Panc1 (cell line): ENCODE measurements at regions of chr20 and their contacts with region 1.

Region 1: DNA sequence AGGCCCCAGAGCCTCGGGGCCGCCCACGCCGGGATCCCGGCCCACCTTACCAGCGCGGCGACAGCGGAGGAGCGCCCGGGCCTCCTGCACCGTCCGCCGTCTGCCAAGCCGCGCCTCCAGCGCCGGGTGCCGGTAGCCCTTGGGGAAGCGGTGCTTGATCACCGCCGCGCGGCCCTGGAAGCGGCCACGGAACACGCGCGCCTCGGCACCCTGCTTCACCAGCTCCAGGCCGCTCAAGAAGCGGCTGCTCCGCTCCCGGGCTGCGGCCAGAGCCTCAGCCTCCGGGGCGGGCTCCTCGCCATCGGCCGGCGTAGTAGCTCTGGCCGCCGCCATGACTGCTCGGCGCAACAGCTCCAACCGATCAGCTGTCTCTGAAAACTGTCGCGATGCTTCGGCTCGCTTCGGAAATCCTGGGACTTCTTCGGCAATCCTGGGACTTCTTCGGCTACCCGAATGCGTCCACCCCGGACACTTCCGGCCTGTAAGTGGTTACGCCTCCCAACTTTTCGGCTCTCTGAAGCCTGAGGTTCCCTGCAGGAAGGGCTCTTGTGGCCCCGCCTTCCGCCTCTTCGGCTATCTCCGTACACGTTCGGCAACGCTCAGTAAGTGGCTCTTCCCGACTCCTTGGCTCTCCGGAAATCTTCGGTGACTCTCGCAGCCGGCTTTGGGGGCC is at the start of gene TP53RK:
- DNase-seq: peak; percentile 100
- ATAC-seq: peak; percentile 99
- H3K4me3 ChIP-seq: peak within 1 kb of the TSS; percentile 92 to 97
- H3K27ac ChIP-seq: peak within 1 kb of the TSS; percentile 94
- H3K4me1 ChIP-seq: peaks cover 10% of the 10 kb centered on the region
- H3K27me3 ChIP-seq: no peaks in the 10 kb centered on the region
- CTCF ChIP-seq: no peak
- total RNA-seq, gene TP53RK: 13.7 TPM

Region 2: DNA sequence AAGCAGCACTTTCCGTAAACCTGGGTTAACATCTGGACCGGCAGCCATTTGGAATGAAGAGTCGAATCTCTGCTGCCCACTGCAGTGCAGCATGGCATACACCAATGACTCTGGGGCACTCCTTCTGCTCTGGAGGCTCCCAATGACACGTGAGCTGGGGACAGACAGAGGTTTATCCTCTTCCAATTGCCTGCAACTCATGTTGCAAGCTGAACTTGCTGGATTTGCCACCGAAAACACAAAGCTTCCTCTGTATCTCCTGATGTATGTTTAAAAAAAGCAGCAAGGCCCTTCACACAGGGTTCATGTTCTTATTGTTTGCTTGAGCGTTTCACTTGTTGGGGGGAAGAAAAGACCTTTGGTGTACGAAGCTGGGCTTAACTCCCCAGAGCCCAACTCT is 610.3 kb before region 1 on chr20:
- CTCF ChIA-PET with region 1: no interaction called
- POLR2A ChIA-PET with region 1: no interaction called
- in situ Hi-C with region 1: no loop called
- intact Hi-C with region 1: no loop called
- DNase-seq: no peak
- ATAC-seq: no peak
- H3K4me3 ChIP-seq: no peak overlapping the region
- H3K27ac ChIP-seq: no peak overlapping the region
- H3K4me1 ChIP-seq: no peaks in the 10 kb centered on the region; the same call in none of the 2 replicates
- H3K27me3 ChIP-seq: no peaks in the 10 kb centered on the region
- CTCF ChIP-seq: no peak

Region 3: DNA sequence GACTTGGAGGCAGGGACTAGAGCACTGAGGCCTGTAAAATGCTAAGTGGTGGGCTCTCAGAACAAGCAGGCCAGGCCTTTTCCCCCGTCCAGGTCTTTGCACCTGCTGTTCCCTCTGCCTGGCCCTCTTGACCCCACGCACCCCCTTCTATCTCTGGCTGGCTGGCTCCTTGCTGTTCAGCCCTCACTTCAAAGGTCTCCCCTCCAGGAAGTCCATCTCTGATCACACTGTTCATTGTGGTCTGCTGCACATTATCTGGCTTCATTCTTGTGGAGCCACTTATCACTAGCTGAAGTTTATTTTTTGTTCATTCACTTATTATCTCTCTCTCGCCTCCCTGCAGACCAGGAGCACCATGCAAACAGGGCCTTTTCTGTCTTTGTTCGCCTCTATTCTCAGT is 62.5 kb before region 1 on chr20:
- CTCF ChIA-PET with region 1: no interaction called
- POLR2A ChIA-PET with region 1: interaction called, 27 read pairs
- in situ Hi-C with region 1: no loop called
- intact Hi-C with region 1: no loop called
- DNase-seq: no peak
- ATAC-seq: no peak
- H3K4me3 ChIP-seq: no peak overlapping the region
- H3K27ac ChIP-seq: no peak overlapping the region
- H3K4me1 ChIP-seq: no peaks in the 10 kb centered on the region
- H3K27me3 ChIP-seq: peaks cover 12% of the 10 kb centered on the region; the same call in 1 of the 2 replicates
- CTCF ChIP-seq: no peak

Region 4: DNA sequence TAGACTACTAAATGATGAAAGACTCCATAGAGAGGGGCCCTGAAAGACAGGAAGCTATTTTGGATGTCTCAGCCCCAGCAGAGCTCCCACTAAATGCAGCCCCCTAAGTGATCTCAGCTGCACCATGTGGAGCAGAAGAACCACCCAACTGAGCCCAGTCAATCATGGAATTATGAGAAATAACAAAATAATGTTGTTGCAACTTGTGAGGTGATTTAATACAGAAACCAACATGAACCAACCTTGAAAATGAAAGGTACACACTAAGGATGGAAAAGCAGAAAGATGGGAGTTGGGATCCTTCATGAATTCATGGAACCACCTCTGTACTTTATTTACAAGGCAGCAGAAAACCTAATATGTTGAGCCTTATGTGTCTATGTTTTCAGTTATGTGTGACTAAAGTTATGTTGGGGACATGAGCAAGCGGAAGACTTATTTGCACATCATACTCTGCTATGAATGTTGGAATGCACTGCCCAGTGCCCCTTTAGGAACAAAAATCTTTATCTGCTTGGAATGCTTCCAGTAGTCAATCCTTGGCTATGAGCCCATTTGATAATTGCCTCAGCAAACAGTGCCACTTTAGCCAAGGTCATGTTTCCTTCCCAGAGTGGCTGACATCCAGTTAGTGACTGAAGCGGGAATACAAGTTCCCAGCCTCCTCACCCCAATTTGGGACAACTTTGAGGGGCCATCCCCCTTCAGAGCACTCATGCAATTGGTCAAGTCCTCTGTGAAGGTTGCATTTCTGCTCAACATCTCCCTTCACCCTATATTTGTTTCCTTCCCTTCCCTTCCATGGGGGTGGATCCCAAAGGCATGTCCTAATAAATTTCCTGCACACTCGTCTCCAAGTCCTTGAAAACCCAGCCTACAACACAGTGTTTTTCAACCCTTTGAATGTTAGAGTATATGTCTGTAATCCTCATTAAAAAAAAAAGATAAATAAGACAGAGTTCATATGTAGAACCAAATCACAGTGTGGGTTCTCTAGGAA is 18.3 kb before region 1 on chr20:
- CTCF ChIA-PET with region 1: no interaction called
- POLR2A ChIA-PET with region 1: no interaction called
- in situ Hi-C with region 1: no loop called
- intact Hi-C with region 1: no loop called
- DNase-seq: no peak
- ATAC-seq: no peak
- H3K4me3 ChIP-seq: no peak overlapping the region
- H3K27ac ChIP-seq: no peak overlapping the region
- H3K4me1 ChIP-seq: no peaks in the 10 kb centered on the region
- H3K27me3 ChIP-seq: no peaks in the 10 kb centered on the region
- CTCF ChIP-seq: no peak